ENCODE measurements at regions of chr21 and their contacts with region 1.

Region 1: DNA sequence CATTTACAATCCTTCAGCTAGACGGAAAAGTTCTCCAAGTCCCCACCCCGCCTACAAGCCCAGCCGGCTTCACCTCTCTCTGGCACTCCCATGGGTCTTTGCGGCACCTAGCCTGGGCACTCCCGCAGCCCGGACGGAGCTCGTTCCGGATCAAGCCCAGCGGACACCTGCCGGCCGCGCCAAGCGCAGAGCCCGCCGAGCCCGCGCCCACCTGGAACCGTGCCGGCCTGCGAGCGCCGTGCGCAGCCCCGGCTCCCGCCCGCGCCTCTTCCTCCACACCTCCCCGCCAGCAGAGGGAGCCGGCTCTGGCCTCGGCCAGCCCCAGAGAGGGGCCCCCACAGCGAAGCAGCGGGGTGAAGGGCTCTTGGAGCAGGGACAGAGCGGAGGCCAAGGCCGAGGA is 50.0 kb upstream of the KRTAP19-8 start:
- DNase-seq: peak in 1 of 4 experiments; percentile 30
- ATAC-seq: peak; percentile 37; the same call in 1 of the 3 replicates
- H3K4me3 ChIP-seq: no peak overlapping the region
- H3K27ac ChIP-seq: no peak overlapping the region
- H3K4me1 ChIP-seq: no peaks in the 10 kb centered on the region
- H3K27me3 ChIP-seq: no peaks in the 10 kb centered on the region
- CTCF ChIP-seq: no peak
- EP300 ChIP-seq: no peak
- POLR2A ChIP-seq: no peak
- RAD21 ChIP-seq: no peak

Region 2: DNA sequence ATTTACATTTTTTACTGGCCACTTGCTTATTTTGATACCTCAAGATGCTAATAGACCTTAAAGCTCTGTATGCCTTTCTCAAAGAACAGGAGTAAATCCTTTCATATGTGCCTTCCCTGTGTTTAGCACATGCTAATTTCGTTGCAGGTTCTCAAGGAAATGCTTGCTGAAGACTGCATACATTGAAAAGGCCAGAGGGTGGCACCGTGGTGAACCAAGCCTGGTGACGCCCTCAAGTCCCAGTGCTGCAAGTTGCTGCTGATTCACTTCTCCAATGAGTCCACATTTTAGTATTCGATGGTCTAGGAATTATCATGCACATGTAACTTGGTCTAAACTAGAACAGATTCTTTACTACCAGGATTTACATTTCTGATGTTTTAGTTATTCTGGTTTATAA is 1015.8 kb before region 1 on chr21:
- CTCF ChIA-PET with region 1: interaction called, 3 read pairs
- POLR2A ChIA-PET with region 1: no interaction called
- in situ Hi-C with region 1: no loop called
- intact Hi-C with region 1: loop called (anchors 10 kb)
- DNase-seq: peak in 1 of 4 experiments; percentile 28
- ATAC-seq: peak; percentile 51; the same call in 2 of the 3 replicates
- H3K4me3 ChIP-seq: no peak overlapping the region
- H3K27ac ChIP-seq: no peak overlapping the region
- H3K4me1 ChIP-seq: no peaks in the 10 kb centered on the region
- H3K27me3 ChIP-seq: no peaks in the 10 kb centered on the region
- CTCF ChIP-seq: peak in 2 of 3 experiments; percentile 12 to 30; a peak in 2 of 6 replicates
- EP300 ChIP-seq: no peak
- POLR2A ChIP-seq: no peak
- RAD21 ChIP-seq: peak in 1 of 2 experiments; percentile 29; a peak in 1 of 4 replicates

Region 3: DNA sequence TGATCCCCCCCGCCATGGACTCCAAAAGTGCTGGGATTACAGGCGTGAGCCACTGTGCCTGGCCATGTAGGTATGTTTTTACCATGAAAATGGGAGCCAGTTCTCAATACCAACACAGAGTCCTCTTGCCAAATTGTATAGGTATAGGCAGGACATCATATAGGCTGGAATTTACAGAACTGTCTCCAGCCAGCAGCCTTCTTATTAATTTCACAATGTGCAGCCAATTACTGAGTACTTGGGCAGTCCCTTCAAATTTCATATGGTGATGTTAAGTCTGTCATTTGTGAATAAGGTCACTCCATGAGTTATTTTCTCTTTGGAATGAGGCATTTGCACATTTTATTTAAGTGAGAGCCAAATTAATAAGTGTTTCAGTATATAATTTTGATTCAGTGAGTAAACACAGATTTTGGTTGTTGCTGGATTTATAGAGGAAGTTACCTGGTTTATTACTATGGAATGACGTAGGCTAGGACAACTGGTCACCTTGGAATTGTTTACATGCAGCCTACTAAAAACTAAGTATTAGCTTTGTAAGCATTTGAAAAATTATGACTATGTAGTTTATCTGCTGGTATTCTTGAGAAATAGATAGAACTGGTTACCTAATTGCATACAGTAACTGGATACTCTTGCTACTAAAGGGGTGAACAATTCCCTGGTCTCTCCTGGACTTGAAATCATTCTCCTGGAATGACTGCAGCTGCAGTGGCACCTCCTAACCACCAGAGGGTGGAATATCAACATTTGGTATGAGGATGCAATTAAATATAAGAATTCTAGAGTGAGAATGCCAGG is 747.7 kb before region 1 on chr21:
- CTCF ChIA-PET with region 1: interaction called, 4 read pairs
- POLR2A ChIA-PET with region 1: no interaction called
- in situ Hi-C with region 1: no loop called
- intact Hi-C with region 1: loop called (anchors 2 kb)
- DNase-seq: peak; percentile 30 to 48 (median 41)
- ATAC-seq: 0 out of 3 replicates have a peak, but pooled peaks have one; percentile 48
- H3K4me3 ChIP-seq: no peak overlapping the region
- H3K27ac ChIP-seq: no peak overlapping the region
- H3K4me1 ChIP-seq: no peaks in the 10 kb centered on the region
- H3K27me3 ChIP-seq: no peaks in the 10 kb centered on the region
- CTCF ChIP-seq: peak; percentile 46 to 71 (median 69); a peak in 5 of 6 replicates
- EP300 ChIP-seq: no peak
- POLR2A ChIP-seq: no peak
- RAD21 ChIP-seq: peak; percentile 47 to 61

Region 4: DNA sequence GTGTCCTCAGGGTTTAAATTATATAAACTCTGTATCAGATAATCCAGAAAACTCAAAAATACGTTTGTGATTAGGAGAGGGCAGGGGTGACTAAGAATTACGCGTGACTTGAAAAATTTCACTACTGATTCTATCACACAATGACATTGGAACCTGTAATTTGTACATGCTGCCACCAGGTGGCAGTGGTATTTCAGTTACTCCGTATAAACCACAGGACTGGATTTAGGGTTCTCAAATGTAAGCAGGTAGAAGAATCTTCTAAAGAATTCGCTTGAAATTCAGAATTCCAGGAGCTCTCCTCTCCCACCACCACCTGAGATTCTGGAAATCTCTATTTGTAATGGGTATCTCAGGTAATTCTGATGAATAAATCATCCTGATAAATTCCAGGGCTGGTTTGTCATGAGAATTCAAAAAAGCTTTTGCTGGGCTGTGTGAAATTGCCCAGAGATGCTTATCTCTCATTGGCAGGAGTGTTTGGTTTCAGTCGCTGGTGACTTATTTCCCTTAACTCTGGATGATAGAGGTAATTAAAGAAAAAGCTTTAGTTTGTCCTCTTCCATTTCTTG is 257.0 kb before region 1 on chr21:
- CTCF ChIA-PET with region 1: no interaction called
- POLR2A ChIA-PET with region 1: interaction called, 4 read pairs
- in situ Hi-C with region 1: no loop called
- intact Hi-C with region 1: loop called (anchors 1 kb)
- DNase-seq: peak; percentile 35 to 62 (median 56)
- ATAC-seq: 0 out of 3 replicates have a peak, but pooled peaks have one; percentile 47
- H3K4me3 ChIP-seq: no peak overlapping the region
- H3K27ac ChIP-seq: no peak overlapping the region
- H3K4me1 ChIP-seq: no peaks in the 10 kb centered on the region
- H3K27me3 ChIP-seq: no peaks in the 10 kb centered on the region
- CTCF ChIP-seq: peak; percentile 41 to 71 (median 62)
- EP300 ChIP-seq: no peak
- POLR2A ChIP-seq: no peak
- RAD21 ChIP-seq: peak; percentile 26 to 60; a peak in 3 of 4 replicates

Region 5: DNA sequence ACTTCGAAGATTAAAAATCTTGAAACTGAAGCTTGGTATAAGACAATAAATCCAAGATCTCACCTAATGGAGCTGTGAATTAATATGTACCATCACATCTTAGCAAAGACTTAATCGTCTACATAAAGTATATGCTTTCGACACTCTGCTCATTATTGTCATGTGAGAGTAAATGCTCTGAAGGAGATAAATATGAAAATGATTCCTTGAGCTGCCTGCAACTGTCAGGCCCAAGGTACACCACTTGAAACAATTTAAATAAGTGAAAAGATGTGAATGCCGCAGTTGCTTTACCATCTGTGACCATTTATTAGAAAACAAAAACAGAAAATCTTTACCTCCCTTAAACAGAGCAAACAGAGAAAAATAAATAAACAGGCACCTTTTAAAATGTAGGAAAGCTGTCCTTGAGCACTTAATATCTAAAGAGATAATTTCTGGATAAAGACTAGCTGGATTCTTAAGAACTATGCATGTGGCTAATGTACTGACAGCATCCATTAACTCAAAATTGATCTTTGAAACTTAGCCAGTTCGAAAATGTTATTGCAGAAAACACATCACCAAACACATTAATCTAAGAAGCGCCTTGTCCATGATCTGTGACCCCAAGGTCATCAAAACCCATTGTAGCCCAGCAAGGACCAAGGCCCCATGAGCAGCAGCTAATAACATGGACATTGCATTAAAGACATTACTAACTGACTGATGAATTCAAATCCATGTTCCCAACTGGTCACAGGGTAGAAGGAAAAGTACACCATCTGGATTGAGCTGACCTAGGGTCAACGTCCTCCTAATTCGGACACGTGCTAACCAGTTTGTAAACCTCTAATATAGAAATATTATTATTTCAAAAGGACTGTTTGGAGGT is 240.5 kb before region 1 on chr21:
- CTCF ChIA-PET with region 1: no interaction called
- POLR2A ChIA-PET with region 1: no interaction called
- in situ Hi-C with region 1: no loop called
- intact Hi-C with region 1: loop called (anchors 5 kb)
- DNase-seq: no peak
- ATAC-seq: no peak
- H3K4me3 ChIP-seq: no peak overlapping the region
- H3K27ac ChIP-seq: no peak overlapping the region
- H3K4me1 ChIP-seq: no peaks in the 10 kb centered on the region
- H3K27me3 ChIP-seq: no peaks in the 10 kb centered on the region
- CTCF ChIP-seq: no peak
- EP300 ChIP-seq: no peak
- POLR2A ChIP-seq: no peak
- RAD21 ChIP-seq: no peak

Region 6: DNA sequence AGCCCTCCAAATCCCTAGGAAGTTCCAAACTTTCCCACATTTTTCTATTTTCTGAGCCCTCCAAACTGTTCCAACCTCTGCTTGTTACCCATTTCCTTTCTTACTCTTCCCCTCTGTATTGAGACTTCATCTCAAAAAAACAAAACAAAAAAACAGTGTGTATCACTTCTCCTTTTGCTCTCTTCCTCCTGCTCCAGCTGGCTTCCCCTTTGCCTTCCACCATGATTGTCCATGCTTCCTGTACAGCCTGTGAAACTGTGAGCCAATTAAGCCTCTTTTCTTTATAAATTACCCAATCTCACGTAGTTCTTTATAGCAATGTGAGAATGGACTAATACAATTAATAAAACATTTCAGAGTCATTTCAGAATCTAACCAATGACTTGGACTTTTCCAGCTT is 19.6 kb after region 1 on chr21:
- CTCF ChIA-PET with region 1: no interaction called
- POLR2A ChIA-PET with region 1: no interaction called
- in situ Hi-C with region 1: no loop called
- intact Hi-C with region 1: no loop called
- DNase-seq: no peak
- ATAC-seq: no peak
- H3K4me3 ChIP-seq: no peak overlapping the region
- H3K27ac ChIP-seq: no peak overlapping the region
- H3K4me1 ChIP-seq: no peaks in the 10 kb centered on the region
- H3K27me3 ChIP-seq: no peaks in the 10 kb centered on the region
- CTCF ChIP-seq: no peak
- EP300 ChIP-seq: no peak
- POLR2A ChIP-seq: no peak
- RAD21 ChIP-seq: no peak

Measured in K562 (cell line).